PC-9 (cell line): ENCODE measurements at regions of chr10 and their contacts with region 1.

Region 1: GRCh38 chr10:22427890-22428571 is 82.7 kb downstream of the SPAG6 start:
- DNase-seq: peak; percentile 42 to 93
- H3K4me3 ChIP-seq: peak overlapping the region; percentile 48; the same call in 1 of the 2 replicates
- H3K27ac ChIP-seq: peak overlapping the region; percentile 92
- H3K4me1 ChIP-seq: peaks cover 57% of the 10 kb centered on the region
- H3K27me3 ChIP-seq: no peaks in the 10 kb centered on the region
- CTCF ChIP-seq: no peak

Region 2: DNA sequence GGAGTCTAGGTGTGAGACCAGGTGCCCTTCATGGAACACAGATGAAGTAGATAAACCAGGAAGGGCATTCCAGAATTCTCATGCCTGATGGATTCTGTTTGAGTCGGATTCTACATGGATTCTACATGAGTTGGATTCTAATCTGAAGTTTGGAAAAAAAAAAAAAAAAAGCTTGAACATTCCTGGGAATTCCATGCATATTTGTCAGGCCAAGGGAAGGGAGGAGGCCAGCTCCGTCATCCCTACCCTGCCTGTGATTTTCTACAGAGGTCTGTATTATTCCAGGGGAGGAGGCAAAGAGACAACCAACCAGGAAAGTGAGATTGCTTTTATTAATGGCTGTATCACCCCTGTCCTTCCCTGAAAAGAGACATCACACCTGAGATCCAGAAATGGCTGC is 182.5 kb before region 1 on chr10:
- CTCF ChIA-PET with region 1: no interaction called
- POLR2A ChIA-PET with region 1: no interaction called
- intact Hi-C with region 1: loop called (anchors 5 kb)
- DNase-seq: no peak
- H3K4me3 ChIP-seq: no peak overlapping the region
- H3K27ac ChIP-seq: peak overlapping the region; percentile 96; the same call in 1 of the 2 replicates
- H3K4me1 ChIP-seq: peaks cover 27% of the 10 kb centered on the region
- H3K27me3 ChIP-seq: no peaks in the 10 kb centered on the region
- CTCF ChIP-seq: no peak

Region 3: GRCh38 chr10:22340362-22341189 is 87.5 kb before region 1 on chr10:
- CTCF ChIA-PET with region 1: no interaction called
- POLR2A ChIA-PET with region 1: no interaction called
- intact Hi-C with region 1: loop called (anchors 2 kb)
- DNase-seq: peak in 1 of 2 experiments; percentile 72
- H3K4me3 ChIP-seq: peak overlapping the region; percentile 84
- H3K27ac ChIP-seq: peak overlapping the region; percentile 61
- H3K4me1 ChIP-seq: peaks cover 6% of the 10 kb centered on the region; the same call in 1 of the 2 replicates
- H3K27me3 ChIP-seq: no peaks in the 10 kb centered on the region
- CTCF ChIP-seq: no peak

Region 4: GRCh38 chr10:22464966-22465629 is 37.1 kb after region 1 on chr10:
- CTCF ChIA-PET with region 1: no interaction called
- POLR2A ChIA-PET with region 1: no interaction called
- intact Hi-C with region 1: no loop called
- DNase-seq: no peak
- H3K4me3 ChIP-seq: no peak overlapping the region
- H3K27ac ChIP-seq: no peak overlapping the region
- H3K4me1 ChIP-seq: no peaks in the 10 kb centered on the region
- H3K27me3 ChIP-seq: no peaks in the 10 kb centered on the region
- CTCF ChIP-seq: no peak

Region 5: GRCh38 chr10:22494007-22494406 is 66.0 kb after region 1 on chr10:
- CTCF ChIA-PET with region 1: no interaction called
- POLR2A ChIA-PET with region 1: no interaction called
- intact Hi-C with region 1: no loop called
- DNase-seq: no peak
- H3K4me3 ChIP-seq: no peak overlapping the region
- H3K27ac ChIP-seq: no peak overlapping the region
- H3K4me1 ChIP-seq: no peaks in the 10 kb centered on the region
- H3K27me3 ChIP-seq: no peaks in the 10 kb centered on the region
- CTCF ChIP-seq: no peak

Region 6: GRCh38 chr10:22714479-22715289 is 286.7 kb after region 1 on chr10 and contains the start of gene PIP4K2A:
- CTCF ChIA-PET with region 1: no interaction called
- POLR2A ChIA-PET with region 1: no interaction called
- intact Hi-C with region 1: loop called (anchors 10 kb)
- DNase-seq: peak in 1 of 2 experiments; percentile 69
- H3K4me3 ChIP-seq: peak within 1 kb of the TSS; percentile 85
- H3K27ac ChIP-seq: no peak within 1 kb of the TSS
- H3K4me1 ChIP-seq: peaks cover 12% of the 10 kb centered on the region
- H3K27me3 ChIP-seq: no peaks in the 10 kb centered on the region
- CTCF ChIP-seq: no peak
- total RNA-seq, gene PIP4K2A: 16.1 and 21.4 TPM in 2 replicates

Region 7: GRCh38 chr10:22988581-22989360 is 560.7 kb after region 1 on chr10:
- CTCF ChIA-PET with region 1: no interaction called
- POLR2A ChIA-PET with region 1: no interaction called
- intact Hi-C with region 1: loop called (anchors 5 kb)
- DNase-seq: peak in 1 of 2 experiments; percentile 46
- H3K4me3 ChIP-seq: no peak overlapping the region
- H3K27ac ChIP-seq: no peak overlapping the region
- H3K4me1 ChIP-seq: no peaks in the 10 kb centered on the region
- H3K27me3 ChIP-seq: no peaks in the 10 kb centered on the region
- CTCF ChIP-seq: peak; percentile 87